HEK293 (cell line): ENCODE measurements at regions of chr9 and their contacts with region 1.

Region 1: GRCh38 chr9:36873247-36873875 is 160.7 kb downstream of the PAX5 start:
- H3K4me3 ChIP-seq: no peak overlapping the region
- H3K27ac ChIP-seq: no peak overlapping the region
- H3K4me1 ChIP-seq: no peaks in the 10 kb centered on the region
- CTCF ChIP-seq: peak; percentile 75

Region 2: GRCh38 chr9:36862206-36863145 is 10.9 kb before region 1 on chr9:
- CTCF ChIA-PET with region 1: interaction called, 58 read pairs
- POLR2A ChIA-PET with region 1: no interaction called
- H3K4me3 ChIP-seq: no peak overlapping the region
- H3K27ac ChIP-seq: no peak overlapping the region
- H3K4me1 ChIP-seq: no peaks in the 10 kb centered on the region
- CTCF ChIP-seq: peak; percentile 35; the same call in 1 of the 2 replicates

Region 3: GRCh38 chr9:36891341-36891959 is 18.1 kb after region 1 on chr9:
- CTCF ChIA-PET with region 1: interaction called, 45 read pairs
- POLR2A ChIA-PET with region 1: no interaction called
- H3K4me3 ChIP-seq: no peak overlapping the region
- H3K27ac ChIP-seq: no peak overlapping the region
- H3K4me1 ChIP-seq: no peaks in the 10 kb centered on the region
- CTCF ChIP-seq: no peak

Region 4: DNA sequence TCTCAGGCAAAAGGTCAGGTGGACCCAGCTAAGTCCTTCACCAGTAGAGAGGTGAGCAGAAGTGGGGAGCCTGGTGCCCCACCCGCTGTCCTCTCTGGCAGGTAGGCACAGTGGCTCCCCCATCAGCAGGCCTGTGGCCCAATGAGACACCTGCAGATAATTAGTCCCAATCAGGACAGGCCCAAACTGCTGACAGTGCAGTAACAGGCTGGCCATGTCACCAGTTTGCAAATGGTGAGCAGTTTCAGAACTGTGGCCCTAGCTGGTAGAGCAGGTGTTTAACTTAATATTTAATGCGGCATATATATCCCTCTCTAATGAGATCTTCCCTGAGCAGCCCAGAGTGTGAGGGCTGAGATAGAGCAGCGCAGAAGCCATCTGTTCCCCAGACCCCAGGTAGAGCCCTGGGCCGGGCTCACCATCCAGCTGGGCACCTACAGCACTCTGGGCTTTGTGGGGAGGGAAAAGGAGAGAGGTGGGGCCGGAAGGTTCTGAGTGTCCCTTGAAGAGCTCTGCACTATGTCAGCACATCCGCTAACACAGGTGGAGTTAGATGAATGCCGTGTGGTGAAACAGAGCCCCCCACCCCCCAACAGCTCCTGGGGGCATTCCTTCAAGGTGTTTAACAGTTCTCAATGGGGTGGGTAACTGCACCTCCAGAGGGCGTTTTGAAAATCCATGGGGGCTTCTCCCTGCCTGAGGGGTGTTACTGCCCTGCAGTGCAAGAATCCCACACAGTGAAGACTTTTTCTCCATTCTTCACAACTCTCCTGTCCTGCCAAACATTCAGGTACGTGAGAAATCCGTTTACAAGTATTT is 40.2 kb after region 1 on chr9:
- CTCF ChIA-PET with region 1: interaction called, 51 read pairs
- POLR2A ChIA-PET with region 1: no interaction called
- H3K4me3 ChIP-seq: no peak overlapping the region
- H3K27ac ChIP-seq: no peak overlapping the region
- H3K4me1 ChIP-seq: peaks cover 8% of the 10 kb centered on the region; the same call in 1 of the 2 replicates
- CTCF ChIP-seq: no peak

Region 5: DNA sequence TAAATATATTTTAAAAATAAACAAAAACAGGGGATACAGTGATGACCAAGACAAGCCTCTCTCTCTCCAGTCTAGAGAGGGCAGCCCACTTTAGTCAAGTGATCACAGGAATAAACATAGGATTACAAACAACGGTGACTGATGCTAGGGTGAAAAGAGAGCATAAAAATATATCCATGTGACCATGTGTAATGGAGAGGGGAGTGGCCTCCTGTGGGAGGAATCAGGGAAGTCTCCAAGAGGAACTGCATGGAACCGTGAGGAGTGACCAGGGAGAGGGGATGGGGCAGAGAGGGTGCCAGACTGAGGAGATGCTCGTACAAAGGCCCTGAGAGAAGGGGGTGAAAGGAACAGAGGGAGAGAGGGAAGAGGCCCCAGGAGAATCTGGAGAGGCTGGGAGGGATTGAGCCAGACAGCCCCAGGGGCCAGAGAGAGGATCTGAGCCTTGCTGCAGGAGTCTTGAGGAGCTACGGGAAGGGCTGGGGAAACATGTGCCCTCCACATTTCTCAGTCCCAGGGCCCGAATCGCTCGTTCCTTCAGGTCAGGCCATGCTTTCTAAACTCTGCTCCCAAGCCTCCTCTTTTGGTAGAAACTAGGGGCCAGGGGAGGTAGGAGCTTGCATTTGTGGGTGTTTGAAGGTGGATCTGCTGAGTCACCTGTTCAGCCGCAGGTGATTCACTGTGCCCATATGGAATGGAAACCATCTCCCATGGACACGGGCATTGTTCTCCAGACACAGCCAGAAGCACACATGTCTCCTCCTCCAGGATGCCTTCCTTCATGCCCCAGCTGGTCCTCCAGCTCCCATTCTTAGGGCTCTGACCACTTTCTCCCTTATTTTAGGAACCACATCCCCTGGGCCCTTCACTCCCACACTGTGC is 96.9 kb after region 1 on chr9:
- CTCF ChIA-PET with region 1: interaction called, 22 read pairs
- POLR2A ChIA-PET with region 1: no interaction called
- H3K4me3 ChIP-seq: no peak overlapping the region
- H3K27ac ChIP-seq: no peak overlapping the region
- H3K4me1 ChIP-seq: peaks cover 4% of the 10 kb centered on the region
- CTCF ChIP-seq: no peak

Region 6: DNA sequence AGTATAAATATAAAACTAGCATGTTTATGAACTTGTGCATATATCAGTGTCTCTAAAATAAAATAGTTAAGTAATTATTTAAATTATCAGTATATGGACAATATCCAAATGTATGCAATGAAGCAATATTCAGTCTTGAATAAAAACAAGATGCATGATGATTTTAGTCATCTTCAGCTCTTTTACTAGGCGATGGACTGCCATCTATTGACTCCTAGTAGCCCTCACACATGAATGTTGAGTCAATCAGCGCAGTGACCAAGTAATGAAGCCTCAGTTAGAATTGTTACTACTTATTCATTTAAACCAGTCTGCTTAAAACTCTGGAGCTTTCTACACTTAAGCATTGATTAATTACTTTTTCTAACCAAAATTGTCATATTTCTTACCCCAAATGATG is 456.2 kb after region 1 on chr9:
- CTCF ChIA-PET with region 1: interaction called, 17 read pairs
- POLR2A ChIA-PET with region 1: no interaction called
- H3K4me3 ChIP-seq: no peak overlapping the region
- H3K27ac ChIP-seq: no peak overlapping the region
- H3K4me1 ChIP-seq: peaks cover 5% of the 10 kb centered on the region; the same call in 1 of the 2 replicates
- CTCF ChIP-seq: no peak